Heart right ventricle (tissue), 16 donors: ENCODE measurements at regions of chr7 and their contacts with region 1.

Region 1: GRCh38 chr7:43582503-43583423 is at the start of gene STK17A:
- DNase-seq: peak; percentile 91 to 93
- ATAC-seq: peak; percentile 93 to 99 (median 96)
- H3K4me3 ChIP-seq: peak within 1 kb of the TSS; percentile 70 to 97 (median 86)
- H3K27ac ChIP-seq: peak within 1 kb of the TSS; percentile 65 to 98 (median 95)
- H3K4me1 ChIP-seq: peaks cover 0 to 31% (median 22%) of the 10 kb centered on the region in 9 donors
- H3K27me3 ChIP-seq: peaks cover 0 to 13% (median 0%) of the 10 kb centered on the region in 7 donors
- CTCF ChIP-seq: peak; percentile 91 to 99 (median 96)
- total RNA-seq, gene STK17A: 10.6 to 37.4 (median 23.3) TPM

Region 2: GRCh38 chr7:43318188-43318770 is 264.5 kb before region 1 on chr7:
- intact Hi-C with region 1: no loop called
- DNase-seq: no peak
- ATAC-seq: no peak
- H3K4me3 ChIP-seq: no peak overlapping the region
- H3K27ac ChIP-seq: no peak overlapping the region
- H3K4me1 ChIP-seq: no peaks in the 10 kb centered on the region
- H3K27me3 ChIP-seq: peaks cover 0 to 5% (median 0%) of the 10 kb centered on the region in 7 donors
- CTCF ChIP-seq: no peak

Region 3: GRCh38 chr7:43625453-43625852 is 42.7 kb after region 1 on chr7:
- intact Hi-C with region 1: loop called in 1 of 10 experiments (anchors 5 kb)
- DNase-seq: no peak
- ATAC-seq: peak in 6 of 8 donors; percentile 20 to 73 (median 57)
- H3K4me3 ChIP-seq: no peak overlapping the region
- H3K27ac ChIP-seq: peak overlapping the region in 2 of 10 donors; percentile 1 to 6
- H3K4me1 ChIP-seq: peaks cover 0 to 35% (median 14%) of the 10 kb centered on the region in 9 donors
- H3K27me3 ChIP-seq: no peaks in the 10 kb centered on the region
- CTCF ChIP-seq: no peak

Region 4: GRCh38 chr7:43647673-43648472 is 65.1 kb after region 1 on chr7:
- intact Hi-C with region 1: loop called in 3 of 10 experiments (anchors 5 kb)
- DNase-seq: peak; percentile 43 to 45
- ATAC-seq: peak; percentile 56 to 82 (median 66)
- H3K4me3 ChIP-seq: peak overlapping the region in 2 of 10 donors; percentile 17 to 21
- H3K27ac ChIP-seq: peak overlapping the region; percentile 72 to 96 (median 90)
- H3K4me1 ChIP-seq: peaks cover 36 to 85% (median 70%) of the 10 kb centered on the region in 9 donors
- H3K27me3 ChIP-seq: no peaks in the 10 kb centered on the region
- CTCF ChIP-seq: no peak

Region 5: GRCh38 chr7:43700059-43700501 is 117.3 kb after region 1 on chr7:
- intact Hi-C with region 1: loop called (anchors 1 to 5 kb)
- DNase-seq: no peak
- ATAC-seq: peak in 7 of 8 donors; percentile 49 to 83 (median 60)
- H3K4me3 ChIP-seq: no peak overlapping the region
- H3K27ac ChIP-seq: no peak overlapping the region
- H3K4me1 ChIP-seq: peaks cover 0 to 30% (median 7%) of the 10 kb centered on the region in 9 donors
- H3K27me3 ChIP-seq: no peaks in the 10 kb centered on the region
- CTCF ChIP-seq: peak; percentile 50 to 87 (median 76)

Region 6: GRCh38 chr7:43721193-43721806 is 138.5 kb after region 1 on chr7:
- intact Hi-C with region 1: loop called in 8 of 10 experiments (anchors 1 to 5 kb)
- DNase-seq: peak in 1 of 2 donors; percentile 16
- ATAC-seq: no peak
- H3K4me3 ChIP-seq: no peak overlapping the region
- H3K27ac ChIP-seq: no peak overlapping the region
- H3K4me1 ChIP-seq: peaks cover 0 to 26% (median 7%) of the 10 kb centered on the region in 9 donors
- H3K27me3 ChIP-seq: no peaks in the 10 kb centered on the region
- CTCF ChIP-seq: peak; percentile 48 to 82 (median 75)

Region 7: DNA sequence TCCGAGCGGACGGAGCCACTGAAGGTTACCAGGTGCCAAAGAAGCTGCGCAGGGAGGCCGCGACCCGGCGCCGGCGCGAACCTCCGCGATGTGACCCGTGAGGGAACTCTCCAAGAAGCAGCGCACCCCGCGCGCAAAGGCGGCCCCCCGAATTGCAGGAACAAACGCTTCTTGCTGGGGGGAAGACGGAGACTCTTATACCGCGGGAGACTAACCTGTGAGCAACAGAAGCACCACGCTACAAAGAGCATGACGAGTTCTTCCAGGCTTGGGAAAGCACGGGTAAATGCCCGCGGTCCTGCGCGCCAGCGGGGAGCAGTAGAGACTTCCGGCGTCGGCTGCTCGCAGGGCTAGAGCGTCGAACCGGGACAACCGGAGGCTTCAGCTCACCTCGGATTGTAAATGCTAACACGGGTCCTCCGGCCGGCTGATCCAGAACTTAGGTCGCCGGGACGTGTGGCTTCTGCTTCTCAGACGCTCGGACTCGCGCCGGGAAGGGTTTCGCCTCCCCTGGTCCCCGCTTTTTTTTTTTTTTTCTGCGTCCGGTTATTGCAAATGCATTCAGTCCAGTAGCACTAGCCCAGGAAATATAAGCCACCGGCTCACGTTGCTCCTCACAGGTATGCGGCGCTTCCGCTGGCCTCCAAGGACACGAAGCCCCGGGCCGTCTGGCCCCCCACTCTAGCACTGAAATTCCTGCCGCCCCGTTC is 146.6 kb after region 1 on chr7 and contains the start of gene COA1:
- intact Hi-C with region 1: loop called in 6 of 10 experiments (anchors 2 to 5 kb)
- DNase-seq: peak; percentile 86 to 89
- ATAC-seq: peak; percentile 98 to 99 (median 99)
- H3K4me3 ChIP-seq: peak within 1 kb of the TSS; percentile 76 to 94 (median 84)
- H3K27ac ChIP-seq: peak within 1 kb of the TSS; percentile 70 to 96 (median 92)
- H3K4me1 ChIP-seq: peaks cover 0 to 40% (median 30%) of the 10 kb centered on the region in 9 donors
- H3K27me3 ChIP-seq: no peaks in the 10 kb centered on the region
- CTCF ChIP-seq: peak in 3 of 9 donors; percentile 14 to 27 (median 20)
- total RNA-seq, gene COA1: 64.5 to 83.1 (median 75.4) TPM

Region 8: GRCh38 chr7:44172803-44173424 is 590.2 kb after region 1 on chr7:
- intact Hi-C with region 1: no loop called
- DNase-seq: no peak
- ATAC-seq: no peak
- H3K4me3 ChIP-seq: no peak overlapping the region
- H3K27ac ChIP-seq: no peak overlapping the region
- H3K4me1 ChIP-seq: peaks cover 0 to 6% (median 0%) of the 10 kb centered on the region in 9 donors
- H3K27me3 ChIP-seq: peaks cover 0 to 4% (median 0%) of the 10 kb centered on the region in 7 donors
- CTCF ChIP-seq: no peak